MCF 10A (cell line): ENCODE measurements at regions of chr1 and their contacts with region 1.

Region 1: DNA sequence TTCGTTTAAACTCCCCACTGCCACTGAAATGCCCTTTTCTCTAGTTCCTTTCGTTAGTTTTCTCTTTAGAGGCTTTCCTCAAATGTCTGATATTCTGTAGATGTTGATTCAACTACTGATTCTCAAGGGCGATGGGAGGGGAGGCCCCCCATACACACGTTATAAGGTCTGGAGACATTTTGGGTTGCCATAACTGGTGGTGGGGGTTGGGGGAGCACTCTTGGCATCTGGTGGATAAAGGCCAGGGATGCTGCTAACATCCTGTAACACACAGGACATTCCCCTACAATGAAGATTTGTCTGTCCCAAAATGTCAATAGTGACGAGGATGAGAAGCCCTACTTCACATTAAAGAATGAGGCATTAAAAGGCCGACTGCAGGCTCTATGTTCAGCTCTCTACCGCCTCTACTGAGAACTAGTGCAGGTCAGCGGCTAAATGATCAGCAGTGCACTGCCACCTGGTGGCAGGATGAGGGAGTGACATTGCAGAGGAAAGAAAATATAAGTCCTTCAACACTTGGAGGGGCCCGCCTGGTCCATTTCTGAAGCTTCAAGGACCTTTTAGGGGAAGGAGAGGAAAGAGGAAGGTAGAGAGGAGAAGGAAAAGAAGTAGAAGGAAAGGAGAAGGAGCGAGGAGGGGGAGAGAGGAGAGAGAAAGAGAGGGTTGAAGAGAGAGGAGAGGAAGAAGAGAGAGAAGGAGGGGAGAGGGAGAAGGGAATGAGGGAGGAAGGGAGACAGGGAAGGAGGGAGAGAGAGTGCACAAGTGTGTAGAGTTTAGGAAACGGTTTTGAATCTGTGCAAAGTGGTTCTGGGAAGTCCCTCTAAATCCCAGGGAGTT is 29.4 kb downstream of the ALG14 start:
- DNase-seq: peak; percentile 82
- H3K4me3 Mint-ChIP-seq: no peak overlapping the region
- H3K27ac Mint-ChIP-seq: no peak overlapping the region
- H3K4me1 Mint-ChIP-seq: peaks cover 10% of the 10 kb centered on the region
- H3K27me3 Mint-ChIP-seq: no peaks in the 10 kb centered on the region
- CTCF ChIP-seq: peak; percentile 98

Region 2: GRCh38 chr1:94481473-94481933 is 561.9 kb before region 1 on chr1:
- CTCF ChIA-PET with region 1: interaction called, 5 read pairs
- POLR2A ChIA-PET with region 1: no interaction called
- intact Hi-C with region 1: loop called (anchors 1 kb)
- DNase-seq: peak; percentile 78
- H3K4me3 Mint-ChIP-seq: no peak overlapping the region
- H3K27ac Mint-ChIP-seq: no peak overlapping the region
- H3K4me1 Mint-ChIP-seq: no peaks in the 10 kb centered on the region
- H3K27me3 Mint-ChIP-seq: no peaks in the 10 kb centered on the region
- CTCF ChIP-seq: peak; percentile 71

Region 3: DNA sequence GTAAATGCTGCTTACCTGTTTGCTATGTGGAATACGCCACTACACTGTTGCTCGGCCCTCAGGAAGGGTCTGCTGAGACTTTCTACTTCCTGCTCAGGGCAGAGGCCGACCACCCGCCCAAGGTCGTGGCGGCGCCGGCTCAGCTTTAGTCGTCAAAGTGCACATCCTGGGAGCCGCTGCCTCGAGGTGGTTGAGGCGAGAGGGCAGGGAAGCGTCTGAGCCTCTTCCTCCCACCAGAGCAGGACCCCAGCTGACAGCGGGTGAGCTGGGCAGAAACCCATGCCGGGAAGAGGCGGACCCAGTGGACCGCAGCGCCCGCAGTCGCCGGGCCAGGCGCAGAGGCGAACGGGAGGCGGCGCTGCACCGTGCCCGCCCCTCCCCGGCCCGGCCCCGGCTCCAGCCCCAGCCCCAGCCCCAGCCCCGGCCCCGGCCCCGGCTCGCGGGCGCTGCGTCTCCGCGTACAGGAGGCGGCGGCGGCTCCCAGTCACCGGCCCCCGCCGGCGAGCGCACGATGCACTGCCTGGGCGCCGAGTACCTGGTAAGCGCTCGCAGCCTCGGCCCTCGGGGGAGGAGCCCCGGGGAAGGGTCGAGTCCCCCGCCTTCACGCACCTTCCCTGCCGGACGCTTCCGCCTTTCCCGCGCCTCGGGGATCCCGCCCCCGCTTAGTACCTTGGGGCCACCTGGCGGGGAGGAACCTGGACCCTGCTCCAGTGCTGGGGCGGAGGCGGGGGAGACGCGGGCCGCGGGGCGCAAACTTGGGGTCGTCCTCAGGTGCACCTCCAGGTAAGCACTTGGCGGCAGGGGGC is 223.2 kb before region 1 on chr1 and contains the start of gene SLC44A3:
- CTCF ChIA-PET with region 1: interaction called, 8 read pairs
- POLR2A ChIA-PET with region 1: interaction called, 4 read pairs
- intact Hi-C with region 1: loop called (anchors 1 kb)
- DNase-seq: peak; percentile 51
- H3K4me3 Mint-ChIP-seq: peak within 1 kb of the TSS; percentile 69
- H3K27ac Mint-ChIP-seq: no peak within 1 kb of the TSS
- H3K4me1 Mint-ChIP-seq: peaks cover 6% of the 10 kb centered on the region
- H3K27me3 Mint-ChIP-seq: no peaks in the 10 kb centered on the region
- CTCF ChIP-seq: peak; percentile 30
- total RNA-seq, gene SLC44A3: 0.83 and 2.8 TPM in 2 replicates

Region 4: DNA sequence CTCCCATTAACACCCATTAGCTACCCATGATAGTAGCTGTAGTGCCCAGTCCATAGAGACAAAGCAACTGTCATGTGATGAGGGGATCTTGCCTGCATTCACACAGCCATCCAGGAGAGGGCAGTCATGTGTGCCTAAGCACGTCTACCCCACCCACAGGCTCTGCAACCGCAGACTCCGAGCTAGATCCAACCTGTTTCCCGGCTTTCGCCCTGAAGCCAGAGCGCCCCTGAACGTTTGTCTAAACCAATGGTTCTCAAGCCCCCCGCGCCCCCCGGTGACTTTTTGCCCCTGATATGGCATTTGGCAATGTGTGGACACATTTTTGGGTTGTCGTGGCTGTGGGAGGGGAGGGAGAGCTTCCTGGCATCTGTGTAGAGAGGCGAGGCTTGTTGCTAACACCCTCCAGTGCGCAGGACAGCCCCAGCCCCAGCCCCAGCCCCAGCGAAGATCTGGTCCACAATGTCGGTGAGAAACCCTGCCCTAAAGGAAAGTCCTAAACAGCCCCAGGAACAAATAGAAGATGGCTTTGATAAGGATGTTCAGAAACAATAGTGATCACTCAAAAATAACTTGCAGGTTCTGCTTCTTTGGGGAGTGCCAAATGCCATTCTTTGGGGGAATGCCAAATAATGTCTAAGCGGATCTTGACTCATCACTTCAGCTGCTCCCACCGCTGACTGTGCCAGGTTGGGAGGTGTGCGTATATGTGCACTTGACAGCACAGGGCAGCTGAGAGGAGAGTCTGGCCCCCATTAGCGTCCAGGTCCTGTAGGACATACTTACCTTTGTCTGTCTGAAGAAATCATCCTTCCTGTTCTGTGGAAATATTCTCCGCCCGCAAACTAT is 188.7 kb before region 1 on chr1:
- CTCF ChIA-PET with region 1: interaction called, 192 read pairs
- POLR2A ChIA-PET with region 1: interaction called, 58 read pairs
- intact Hi-C with region 1: loop called (anchors 1 kb)
- DNase-seq: peak; percentile 97
- H3K4me3 Mint-ChIP-seq: no peak overlapping the region
- H3K27ac Mint-ChIP-seq: no peak overlapping the region
- H3K4me1 Mint-ChIP-seq: peaks cover 6% of the 10 kb centered on the region
- H3K27me3 Mint-ChIP-seq: no peaks in the 10 kb centered on the region
- CTCF ChIP-seq: peak; percentile 82

Region 5: DNA sequence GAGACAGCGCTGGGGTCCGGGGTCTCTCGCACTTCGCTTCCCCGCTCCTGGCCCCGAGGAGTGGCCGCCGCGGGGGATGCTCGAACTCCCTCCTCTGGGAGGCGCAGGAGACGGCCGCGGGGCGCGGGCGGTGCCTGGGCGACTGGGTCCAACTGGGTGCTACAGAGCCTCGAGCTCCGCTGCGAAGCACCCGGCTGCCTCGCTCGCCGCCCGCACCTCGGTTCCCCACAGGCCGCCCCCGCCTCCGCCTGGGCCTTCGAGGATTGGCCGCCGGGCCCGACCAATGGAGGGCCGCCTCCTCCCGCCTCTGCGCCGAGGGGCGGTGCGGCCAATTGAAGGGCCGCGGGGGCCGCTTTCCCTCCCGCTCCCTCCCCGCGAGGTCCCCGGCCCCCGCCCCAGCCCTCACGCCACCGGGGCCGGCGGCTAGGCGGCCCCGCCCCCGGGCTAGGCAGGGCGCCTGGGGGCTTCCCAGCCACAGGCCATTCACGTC is 116.4 kb before region 1 on chr1 and contains the start of gene CNN3:
- CTCF ChIA-PET with region 1: interaction called, 5 read pairs
- POLR2A ChIA-PET with region 1: no interaction called
- intact Hi-C with region 1: loop called (anchors 1 kb)
- DNase-seq: peak; percentile 85
- H3K4me3 Mint-ChIP-seq: peak within 1 kb of the TSS; percentile 97
- H3K27ac Mint-ChIP-seq: peak within 1 kb of the TSS; percentile 69
- H3K4me1 Mint-ChIP-seq: peaks cover 22% of the 10 kb centered on the region
- H3K27me3 Mint-ChIP-seq: no peaks in the 10 kb centered on the region
- CTCF ChIP-seq: no peak
- total RNA-seq, gene CNN3: 44.5 and 48.2 TPM in 2 replicates

Region 6: DNA sequence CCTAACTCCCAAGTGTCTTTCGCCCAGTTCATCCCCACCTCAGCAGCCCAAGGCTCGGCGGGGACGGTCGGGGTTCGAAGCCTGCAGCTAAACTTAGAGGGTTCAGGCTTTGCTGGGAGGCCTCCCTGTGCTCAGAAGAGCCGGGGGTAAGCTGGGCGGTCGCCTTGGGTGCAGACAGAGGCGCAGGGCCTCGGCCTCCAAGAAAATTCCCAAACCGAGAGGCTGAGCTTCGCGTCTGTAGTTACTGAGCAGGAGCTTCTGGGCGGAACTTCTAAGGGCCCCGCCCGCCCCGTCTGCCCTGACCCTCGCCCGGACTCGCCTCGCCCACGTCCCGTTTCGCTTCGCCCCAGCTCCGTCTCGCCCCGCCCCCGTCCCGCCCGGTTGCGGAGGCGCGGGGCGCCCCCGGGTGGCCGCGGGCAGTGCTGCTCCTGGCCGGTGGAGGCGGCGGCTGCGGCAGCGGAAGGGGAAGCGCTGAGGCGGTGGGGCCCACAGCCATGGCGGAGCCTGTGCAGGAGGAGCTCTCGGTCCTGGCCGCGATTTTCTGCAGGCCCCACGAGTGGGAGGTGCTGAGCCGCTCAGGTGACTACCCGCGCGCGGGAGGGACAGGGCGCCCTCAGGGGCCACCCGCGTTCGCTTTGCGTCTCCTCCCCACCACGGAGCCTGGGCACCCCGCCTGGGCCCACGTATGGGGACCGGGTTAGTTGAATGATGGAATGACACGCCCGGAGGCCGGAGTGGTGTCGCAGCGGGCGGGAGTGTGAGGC is 190.6 kb after region 1 on chr1 and contains the start of gene RWDD3:
- CTCF ChIA-PET with region 1: interaction called, 8 read pairs
- POLR2A ChIA-PET with region 1: interaction called, 5 read pairs
- intact Hi-C with region 1: loop called (anchors 1 kb)
- DNase-seq: peak; percentile 90
- H3K4me3 Mint-ChIP-seq: peak within 1 kb of the TSS; percentile 91
- H3K27ac Mint-ChIP-seq: peak within 1 kb of the TSS; percentile 87
- H3K4me1 Mint-ChIP-seq: peaks cover 18% of the 10 kb centered on the region
- H3K27me3 Mint-ChIP-seq: no peaks in the 10 kb centered on the region
- CTCF ChIP-seq: peak; percentile 89
- total RNA-seq, gene RWDD3: 10.3 and 14.7 TPM in 2 replicates